ENCODE measurements at regions of chr12 and their contacts with region 1.

Region 1: GRCh38 chr12:9925708-9926393 is 6.3 kb downstream of the CLEC2A start:
- DNase-seq: no peak
- H3K4me3 ChIP-seq: no peak overlapping the region
- CTCF ChIP-seq: no peak
- POLR2A ChIP-seq: no peak

Region 2: GRCh38 chr12:9810671-9811070 is 115.2 kb before region 1 on chr12:
- intact Hi-C with region 1: no loop called
- DNase-seq: no peak
- H3K4me3 ChIP-seq: no peak overlapping the region
- CTCF ChIP-seq: no peak
- POLR2A ChIP-seq: no peak

Region 3: DNA sequence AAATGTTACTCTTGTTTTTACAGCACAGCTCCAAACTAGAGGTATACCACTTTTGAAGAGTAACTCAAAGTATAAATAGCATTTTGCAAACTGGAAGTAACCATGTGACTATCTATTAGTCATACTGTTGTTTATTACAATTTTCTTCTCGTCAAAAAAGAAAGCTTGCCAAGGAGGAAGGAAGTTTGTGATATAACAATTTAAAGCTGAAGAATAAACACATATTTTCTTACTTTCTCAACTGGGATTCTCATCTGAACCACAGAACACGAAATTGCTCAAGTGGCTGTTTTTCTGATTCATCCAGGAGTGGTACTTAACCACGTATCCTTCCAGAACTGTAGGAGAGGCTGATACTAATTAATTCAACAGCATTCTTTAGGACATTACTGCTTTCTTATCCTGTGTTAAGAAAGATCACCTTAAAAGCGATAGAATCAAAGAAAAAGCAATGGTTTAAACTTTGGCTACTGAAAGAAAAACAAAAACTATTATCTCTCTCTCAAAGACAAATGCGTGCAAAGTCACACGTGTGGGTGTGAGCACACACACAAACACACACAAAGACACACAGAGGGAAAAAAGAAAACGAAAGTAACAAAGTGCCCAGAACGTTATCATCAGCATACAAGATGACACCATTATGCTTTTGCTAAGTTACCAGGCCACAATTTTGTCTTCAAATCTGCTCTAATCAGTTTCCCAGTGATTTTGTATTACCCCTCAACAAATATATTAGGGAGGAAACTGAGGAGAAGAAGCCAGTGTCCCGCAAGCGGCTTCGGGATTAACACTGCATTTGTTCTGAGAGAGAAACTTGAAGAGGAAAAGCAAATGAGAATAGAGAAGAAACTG is 56.3 kb before region 1 on chr12 and contains the start of gene CLEC2B:
- intact Hi-C with region 1: loop called (anchors 5 kb)
- DNase-seq: no peak
- H3K4me3 ChIP-seq: peak within 1 kb of the TSS; percentile 14
- CTCF ChIP-seq: no peak
- POLR2A ChIP-seq: peak in 1 of 2 donors; percentile 10
- total RNA-seq, gene CLEC2B: 52.3 to 90.6 (median 81.9) TPM